CD8-positive, alpha-beta T cell (primary cell): ENCODE measurements at regions of chr14 and their contacts with region 1.

Region 1: GRCh38 chr14:73058224-73058921 is at the start of gene RBM25:
- DNase-seq: peak; percentile 89 to 98 (median 94)
- ATAC-seq: peak; percentile 95
- H3K4me3 ChIP-seq: peak within 1 kb of the TSS; percentile 78 to 99
- H3K4me3 Mint-ChIP-seq: no peak within 1 kb of the TSS
- H3K27ac ChIP-seq: peak within 1 kb of the TSS; percentile 81 to 94
- H3K27ac Mint-ChIP-seq: no peak within 1 kb of the TSS
- H3K4me1 ChIP-seq: peaks cover 44% of the 10 kb centered on the region
- H3K4me1 Mint-ChIP-seq: peaks cover 40% of the 10 kb centered on the region
- H3K27me3 ChIP-seq: no peaks in the 10 kb centered on the region
- H3K27me3 Mint-ChIP-seq: no peaks in the 10 kb centered on the region
- CTCF ChIP-seq: no peak
- total RNA-seq, gene RBM25: 166 to 178 TPM

Region 2: DNA sequence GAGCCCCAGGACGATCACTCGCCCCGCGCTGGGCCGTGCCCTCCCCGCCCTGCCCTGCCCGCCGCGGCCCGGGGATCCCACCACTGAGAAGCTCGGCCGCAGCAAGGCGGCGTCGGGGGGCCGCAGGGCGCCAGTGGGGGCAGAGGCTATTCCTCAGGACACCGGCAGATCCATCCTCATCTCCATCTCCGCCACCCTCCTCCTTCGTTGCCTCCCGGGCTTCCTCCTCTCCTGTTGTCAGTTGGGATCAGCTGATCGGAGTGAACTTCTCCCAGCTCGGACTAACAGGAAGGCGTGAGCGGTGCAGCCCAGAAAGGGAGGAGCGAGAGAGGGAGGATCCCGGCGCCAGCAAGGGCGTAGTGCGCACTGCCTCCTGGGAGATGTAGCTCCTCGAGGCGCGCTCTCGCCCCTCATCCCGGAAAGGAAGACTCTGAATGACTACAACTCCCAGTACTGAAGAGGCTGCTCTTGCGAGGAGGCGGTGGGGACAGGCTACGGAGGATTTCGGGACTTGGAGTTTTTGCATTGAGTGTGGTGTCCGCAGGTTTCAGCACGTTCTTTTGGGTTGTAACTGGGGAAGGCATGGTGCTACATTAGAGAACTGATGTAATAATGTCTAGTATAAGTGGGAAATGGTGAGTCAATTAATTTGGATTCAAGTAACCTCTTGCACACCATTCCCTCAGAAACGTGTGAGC is 31.4 kb before region 1 on chr14 and contains the start of gene ZFYVE1:
- CTCF ChIA-PET with region 1: no interaction called
- POLR2A ChIA-PET with region 1: interaction called, 32 read pairs
- intact Hi-C with region 1: loop called (anchors 1 kb)
- DNase-seq: peak; percentile 80 to 96 (median 91)
- ATAC-seq: peak; percentile 99
- H3K4me3 ChIP-seq: peak within 1 kb of the TSS; percentile 62 to 83
- H3K4me3 Mint-ChIP-seq: peak within 1 kb of the TSS; percentile 92
- H3K27ac ChIP-seq: peak within 1 kb of the TSS; percentile 48 to 52
- H3K27ac Mint-ChIP-seq: peak within 1 kb of the TSS; percentile 87
- H3K4me1 ChIP-seq: peaks cover 11% of the 10 kb centered on the region
- H3K4me1 Mint-ChIP-seq: peaks cover 45% of the 10 kb centered on the region
- H3K27me3 ChIP-seq: no peaks in the 10 kb centered on the region
- H3K27me3 Mint-ChIP-seq: no peaks in the 10 kb centered on the region
- CTCF ChIP-seq: no peak
- total RNA-seq, gene ZFYVE1: 10.0 to 11.3 TPM

Region 3: DNA sequence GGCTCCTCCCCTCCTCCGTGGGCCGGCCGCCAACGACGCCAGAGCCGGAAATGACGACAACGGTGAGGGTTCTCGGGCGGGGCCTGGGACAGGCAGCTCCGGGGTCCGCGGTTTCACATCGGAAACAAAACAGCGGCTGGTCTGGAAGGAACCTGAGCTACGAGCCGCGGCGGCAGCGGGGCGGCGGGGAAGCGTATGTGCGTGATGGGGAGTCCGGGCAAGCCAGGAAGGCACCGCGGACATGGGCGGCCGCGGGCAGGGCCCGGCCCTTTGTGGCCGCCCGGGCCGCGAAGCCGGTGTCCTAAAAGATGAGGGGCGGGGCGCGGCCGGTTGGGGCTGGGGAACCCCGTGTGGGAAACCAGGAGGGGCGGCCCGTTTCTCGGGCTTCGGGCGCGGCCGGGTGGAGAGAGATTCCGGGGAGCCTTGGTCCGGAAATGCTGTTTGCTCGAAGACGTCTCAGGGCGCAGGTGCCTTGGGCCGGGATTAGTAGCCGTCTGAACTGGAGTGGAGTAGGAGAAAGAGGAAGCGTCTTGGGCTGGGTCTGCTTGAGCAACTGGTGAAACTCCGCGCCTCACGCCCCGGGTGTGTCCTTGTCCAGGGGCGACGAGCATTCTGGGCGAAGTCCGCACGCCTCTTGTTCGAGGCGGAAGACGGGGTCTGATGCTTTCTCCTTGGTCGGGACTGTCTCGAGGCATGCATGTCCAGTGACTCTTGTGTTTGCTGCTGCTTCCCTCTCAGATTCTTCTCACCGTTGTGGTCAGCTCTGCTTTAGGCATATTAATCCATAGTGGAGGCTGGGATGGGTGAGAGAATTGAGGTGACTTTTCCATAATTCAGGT is 78.2 kb after region 1 on chr14 and contains the start of gene PSEN1:
- CTCF ChIA-PET with region 1: no interaction called
- POLR2A ChIA-PET with region 1: interaction called, 27 read pairs
- intact Hi-C with region 1: loop called (anchors 1 kb)
- DNase-seq: peak; percentile 98 to 100 (median 99)
- ATAC-seq: peak; percentile 96
- H3K4me3 ChIP-seq: peak within 1 kb of the TSS; percentile 84 to 92
- H3K4me3 Mint-ChIP-seq: peak within 1 kb of the TSS; percentile 97
- H3K27ac ChIP-seq: peak within 1 kb of the TSS; percentile 91 to 93
- H3K27ac Mint-ChIP-seq: peak within 1 kb of the TSS; percentile 99
- H3K4me1 ChIP-seq: peaks cover 17% of the 10 kb centered on the region
- H3K4me1 Mint-ChIP-seq: peaks cover 31% of the 10 kb centered on the region
- H3K27me3 ChIP-seq: no peaks in the 10 kb centered on the region
- H3K27me3 Mint-ChIP-seq: no peaks in the 10 kb centered on the region
- CTCF ChIP-seq: no peak
- total RNA-seq, gene PSEN1: 24.2 to 24.4 TPM

Region 4: DNA sequence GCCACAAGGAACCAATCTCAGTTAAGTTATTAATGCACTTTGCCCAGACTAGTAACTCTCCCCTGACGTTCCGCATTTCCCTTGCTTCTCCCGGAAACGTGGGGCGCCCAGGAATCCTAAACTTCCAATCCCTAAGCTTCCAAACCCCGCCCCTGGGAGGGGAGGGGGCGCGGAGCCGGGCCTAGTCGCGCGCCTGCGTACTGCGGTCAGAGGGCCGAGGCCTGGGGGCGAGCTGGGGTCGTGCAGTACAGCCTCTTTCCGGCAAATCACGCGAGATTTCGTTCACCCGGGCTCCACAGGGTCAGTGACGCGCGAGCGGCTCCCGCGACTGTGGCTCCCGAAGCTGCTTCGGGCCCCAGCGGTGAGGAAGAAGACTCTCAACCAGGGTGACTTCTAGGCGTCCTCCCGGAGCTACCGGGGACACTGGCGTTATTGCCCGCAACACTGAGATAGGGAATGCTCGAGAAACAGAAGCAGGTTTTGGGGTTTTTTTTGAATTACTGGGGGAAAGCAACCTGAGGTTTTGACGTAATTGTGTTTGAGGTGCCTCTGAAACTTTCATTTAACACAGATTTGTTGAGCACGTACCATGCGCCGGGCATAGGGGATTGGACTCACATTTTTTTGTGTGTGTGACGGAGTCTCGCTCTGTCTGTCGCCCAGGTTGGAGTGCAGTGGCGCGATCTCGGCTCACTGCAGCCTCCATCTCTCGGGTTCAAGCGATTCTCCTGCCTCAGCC is 793.4 kb after region 1 on chr14 and contains the start of gene PTGR2:
- CTCF ChIA-PET with region 1: no interaction called
- POLR2A ChIA-PET with region 1: no interaction called
- intact Hi-C with region 1: loop called in 1 of 2 experiments (anchors 1 kb)
- DNase-seq: peak; percentile 77 to 97 (median 89)
- ATAC-seq: peak; percentile 93
- H3K4me3 ChIP-seq: peak within 1 kb of the TSS; percentile 47 to 63
- H3K4me3 Mint-ChIP-seq: peak within 1 kb of the TSS; percentile 90
- H3K27ac ChIP-seq: peak within 1 kb of the TSS; percentile 70 to 81
- H3K27ac Mint-ChIP-seq: peak within 1 kb of the TSS; percentile 98
- H3K4me1 ChIP-seq: peaks cover 6% of the 10 kb centered on the region
- H3K4me1 Mint-ChIP-seq: peaks cover 21% of the 10 kb centered on the region
- H3K27me3 ChIP-seq: no peaks in the 10 kb centered on the region
- H3K27me3 Mint-ChIP-seq: no peaks in the 10 kb centered on the region
- CTCF ChIP-seq: no peak
- total RNA-seq, gene PTGR2: 1.2 to 1.4 TPM

Region 5: DNA sequence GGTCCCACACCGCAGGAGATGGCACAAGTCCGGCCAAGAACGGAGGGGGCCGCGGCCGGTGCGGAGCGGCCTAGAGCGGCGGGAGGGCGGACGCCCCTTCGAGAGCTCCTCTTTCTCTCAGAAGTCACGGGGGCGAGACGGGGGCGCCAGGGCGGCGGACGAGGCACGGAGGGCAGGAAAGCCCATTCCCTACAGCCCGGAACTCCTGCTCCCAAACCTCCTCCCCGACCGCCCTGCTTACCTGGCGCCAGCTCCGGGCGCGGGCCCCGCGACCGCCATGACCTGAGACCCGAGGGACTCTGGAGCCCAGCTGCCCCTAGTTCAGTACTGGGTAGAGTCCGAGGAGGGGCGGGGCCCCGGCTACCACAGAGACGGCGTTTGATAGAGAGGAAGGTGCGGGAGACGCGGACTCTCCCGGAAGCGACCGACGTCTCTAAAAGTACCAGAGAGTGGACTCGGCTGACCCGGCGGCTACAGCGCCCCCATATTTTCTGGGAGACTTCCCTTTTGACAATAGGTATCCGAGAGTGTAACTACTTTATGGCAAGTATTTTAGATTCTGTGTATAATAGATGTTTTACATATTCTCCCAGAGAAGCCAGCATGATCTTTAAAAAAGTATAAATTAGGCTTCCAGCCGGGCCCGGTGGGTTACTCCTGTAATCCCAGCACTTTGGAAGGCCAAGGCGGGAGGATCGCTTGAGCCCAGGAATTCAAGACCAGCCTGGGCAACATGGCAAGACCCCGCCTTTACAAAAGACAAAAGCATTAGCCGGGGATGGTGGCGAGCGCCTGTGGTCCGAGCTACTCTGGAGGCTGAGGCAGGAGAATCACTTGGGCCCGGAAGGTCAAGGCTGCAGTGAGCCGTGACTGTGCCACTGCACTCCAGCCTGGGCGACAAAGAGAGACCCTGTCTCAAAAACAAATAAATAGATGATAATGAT is 1244.5 kb after region 1 on chr14 and contains the start of gene ABCD4:
- CTCF ChIA-PET with region 1: no interaction called
- POLR2A ChIA-PET with region 1: interaction called, 4 read pairs
- intact Hi-C with region 1: loop called in 1 of 2 experiments (anchors 5 kb)
- DNase-seq: peak; percentile 69 to 90 (median 86)
- ATAC-seq: peak; percentile 87
- H3K4me3 ChIP-seq: peak within 1 kb of the TSS; percentile 69 to 85
- H3K4me3 Mint-ChIP-seq: peak within 1 kb of the TSS; percentile 100
- H3K27ac ChIP-seq: peak within 1 kb of the TSS; percentile 78 to 85
- H3K27ac Mint-ChIP-seq: peak within 1 kb of the TSS; percentile 98
- H3K4me1 ChIP-seq: peaks cover 19% of the 10 kb centered on the region
- H3K4me1 Mint-ChIP-seq: peaks cover 28% of the 10 kb centered on the region
- H3K27me3 ChIP-seq: no peaks in the 10 kb centered on the region
- H3K27me3 Mint-ChIP-seq: no peaks in the 10 kb centered on the region
- CTCF ChIP-seq: peak; percentile 18
- total RNA-seq, gene ABCD4: 67.5 to 76.9 TPM